Gastrocnemius medialis (tissue), 4 donors: ENCODE measurements at regions of chr1 and their contacts with region 1.

Region 1: DNA sequence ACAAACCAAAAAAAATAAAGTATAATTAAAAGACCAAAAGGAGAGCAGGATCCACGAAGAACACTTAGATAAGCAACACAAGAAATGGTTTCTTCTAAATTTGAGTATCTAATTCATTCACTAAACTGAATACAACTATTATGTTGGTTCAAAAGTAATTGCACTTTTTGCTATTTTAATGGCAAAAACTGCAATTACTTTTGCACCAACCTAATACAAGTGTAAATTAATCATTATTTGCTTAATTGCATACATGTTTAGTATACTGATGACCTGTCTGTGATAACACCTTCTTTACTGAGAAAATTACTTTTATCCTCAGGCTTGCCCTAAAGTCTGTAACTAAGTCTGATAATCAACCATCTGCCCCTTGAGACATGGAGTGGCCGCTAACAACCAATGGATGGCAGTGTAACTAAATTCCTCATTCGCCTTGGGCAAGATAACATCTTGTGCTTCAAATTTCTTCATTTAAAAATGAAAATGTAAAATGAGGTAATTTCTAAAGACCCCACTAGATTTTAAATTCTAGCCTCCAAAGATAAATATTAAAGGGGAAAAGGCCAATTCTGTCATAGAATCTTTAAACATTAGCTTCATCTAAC is 85.2 kb downstream of the ENAH start:
- DNase-seq: no peak
- ATAC-seq: no peak
- H3K4me3 ChIP-seq: no peak overlapping the region
- H3K27ac ChIP-seq: no peak overlapping the region
- H3K4me1 ChIP-seq: peaks cover 32 to 36% of the 10 kb centered on the region in 2 donors
- H3K27me3 ChIP-seq: no peaks in the 10 kb centered on the region
- CTCF ChIP-seq: no peak
- POLR2A ChIP-seq: no peak

Region 2: DNA sequence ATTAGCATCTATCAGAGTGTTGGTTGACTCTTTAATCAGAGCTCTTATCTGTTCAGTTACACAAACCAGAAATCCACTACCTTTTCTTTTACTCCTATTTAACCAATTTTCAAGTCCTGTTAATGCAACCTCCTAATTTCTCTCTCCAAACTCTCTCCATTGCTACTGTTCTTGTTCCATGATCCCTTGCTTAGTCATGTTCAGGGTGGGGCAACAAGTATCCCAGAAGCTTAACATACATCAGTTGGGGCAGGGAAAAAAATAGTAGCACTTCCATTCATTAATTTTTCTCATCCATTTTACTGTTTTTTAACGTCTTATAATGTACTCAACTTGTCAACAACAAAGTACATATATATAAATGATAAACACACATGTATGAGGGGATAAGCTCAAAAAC is 28.6 kb before region 1 on chr1:
- in situ Hi-C with region 1: no loop called
- intact Hi-C with region 1: loop called (anchors 1 kb)
- DNase-seq: no peak
- ATAC-seq: peak; percentile 46 to 67
- H3K4me3 ChIP-seq: no peak overlapping the region
- H3K27ac ChIP-seq: peak overlapping the region; percentile 28 to 57 (median 50)
- H3K4me1 ChIP-seq: peaks cover 38 to 49% of the 10 kb centered on the region in 2 donors
- H3K27me3 ChIP-seq: no peaks in the 10 kb centered on the region
- CTCF ChIP-seq: no peak
- POLR2A ChIP-seq: no peak

Region 3: GRCh38 chr1:225700164-225700740 is 132.6 kb after region 1 on chr1:
- in situ Hi-C with region 1: no loop called
- intact Hi-C with region 1: loop called (anchors 5 kb)
- DNase-seq: peak; percentile 58 to 60
- ATAC-seq: peak; percentile 89 to 90
- H3K4me3 ChIP-seq: peak overlapping the region; percentile 41 to 57 (median 50)
- H3K27ac ChIP-seq: peak overlapping the region; percentile 85 to 93 (median 87)
- H3K4me1 ChIP-seq: peaks cover 13 to 27% of the 10 kb centered on the region in 2 donors
- H3K27me3 ChIP-seq: no peaks in the 10 kb centered on the region
- CTCF ChIP-seq: no peak
- POLR2A ChIP-seq: no peak